Dorsolateral prefrontal cortex (tissue), 120 donors: ENCODE measurements at regions of chr3 and their contacts with region 1.

Region 1: DNA sequence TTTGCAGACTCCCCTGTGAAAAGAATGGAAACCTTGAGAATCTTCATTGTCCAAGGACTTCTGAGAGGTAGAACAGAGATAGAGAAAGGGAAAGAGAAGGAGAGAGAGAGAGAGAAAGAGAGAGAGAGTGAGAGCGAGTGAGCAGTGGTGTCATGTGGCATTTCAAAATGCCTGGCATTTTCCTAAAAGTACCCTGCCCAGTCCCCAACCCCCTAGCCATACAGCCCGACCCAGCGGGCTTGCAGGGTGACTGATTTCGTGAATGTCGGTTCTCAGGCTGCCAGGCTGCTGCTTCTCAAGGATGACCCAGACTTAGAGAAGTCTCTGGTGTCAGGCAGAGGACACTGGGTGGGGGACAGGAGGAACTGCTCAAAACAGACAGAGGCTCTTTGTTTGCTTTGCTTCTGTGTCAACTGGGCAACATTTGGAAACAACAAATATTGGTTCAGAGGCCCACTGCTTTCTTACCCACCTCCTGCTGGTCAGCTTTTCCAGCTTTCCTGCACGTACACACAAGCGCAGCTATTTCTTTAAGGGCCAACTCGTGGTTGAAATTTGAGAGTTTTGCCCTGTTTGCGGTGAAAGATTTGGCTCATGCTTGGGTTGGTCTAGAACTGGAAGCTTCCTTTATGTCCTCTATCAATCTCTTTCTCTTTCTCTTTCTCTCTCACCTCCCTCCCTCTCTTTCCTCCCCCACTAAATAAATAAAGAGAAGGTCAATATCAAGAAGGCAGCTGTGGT is 3.7 kb upstream of the TF start:
- DNase-seq: no peak
- H3K4me3 ChIP-seq: peak overlapping the region in 25 of 59 donors; percentile 0 to 49 (median 19)
- H3K27ac ChIP-seq: peak overlapping the region; percentile 30 to 100 (median 98)
- H3K27me3 ChIP-seq: no peaks in the 10 kb centered on the region
- CTCF ChIP-seq: peak in 6 of 56 donors; percentile 5 to 38 (median 18)

Region 2: GRCh38 chr3:133573054-133573628 is 169.4 kb before region 1 on chr3:
- intact Hi-C with region 1: loop called in 1 of 2 experiments (anchors 10 kb)
- DNase-seq: peak; percentile 100
- H3K4me3 ChIP-seq: peak overlapping the region; percentile 45 to 99 (median 84)
- H3K27ac ChIP-seq: peak overlapping the region; percentile 6 to 98 (median 90)
- H3K27me3 ChIP-seq: no peaks in the 10 kb centered on the region
- CTCF ChIP-seq: peak in 27 of 56 donors; percentile 7 to 42 (median 20)

Region 3: DNA sequence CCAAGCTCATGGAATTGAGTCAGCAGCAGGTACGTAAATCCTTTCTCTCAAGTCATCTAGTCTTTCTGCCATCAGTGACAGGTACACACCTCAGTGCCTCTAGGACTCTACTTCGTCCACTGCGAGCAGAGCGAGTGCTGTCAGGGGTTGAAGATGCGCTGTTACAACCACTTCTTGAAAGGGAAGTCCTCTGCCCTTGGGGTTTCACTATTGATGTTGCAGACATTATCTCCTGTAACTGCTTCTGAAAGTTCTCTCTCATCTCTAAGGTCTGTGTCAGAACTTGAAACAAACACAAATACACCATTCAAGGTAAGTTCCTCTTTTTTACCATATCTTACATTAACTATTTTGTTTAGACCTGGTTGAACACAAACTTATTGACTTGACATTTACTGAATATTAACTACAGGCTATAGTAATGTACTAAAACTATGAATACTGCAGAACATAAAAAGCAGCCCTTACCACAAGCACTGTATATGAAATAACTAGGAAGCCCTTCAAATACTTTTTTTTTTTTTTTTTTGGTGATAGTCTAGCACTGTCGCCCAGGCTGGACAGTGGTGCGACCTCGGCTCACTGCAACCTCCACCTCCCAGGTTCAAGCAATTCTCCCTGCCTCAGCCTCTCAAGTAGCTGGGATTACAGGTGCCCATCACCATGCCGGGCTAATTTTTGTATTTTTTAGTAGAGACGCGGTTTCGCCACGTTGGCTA is 122.3 kb before region 1 on chr3:
- intact Hi-C with region 1: no loop called
- DNase-seq: no peak
- H3K4me3 ChIP-seq: no peak overlapping the region
- H3K27ac ChIP-seq: no peak overlapping the region
- H3K27me3 ChIP-seq: no peaks in the 10 kb centered on the region
- CTCF ChIP-seq: no peak

Region 4: GRCh38 chr3:133693821-133694220 is 48.7 kb before region 1 on chr3:
- intact Hi-C with region 1: no loop called
- DNase-seq: no peak
- H3K4me3 ChIP-seq: no peak overlapping the region
- H3K27ac ChIP-seq: no peak overlapping the region
- H3K27me3 ChIP-seq: no peaks in the 10 kb centered on the region
- CTCF ChIP-seq: no peak

Region 5: DNA sequence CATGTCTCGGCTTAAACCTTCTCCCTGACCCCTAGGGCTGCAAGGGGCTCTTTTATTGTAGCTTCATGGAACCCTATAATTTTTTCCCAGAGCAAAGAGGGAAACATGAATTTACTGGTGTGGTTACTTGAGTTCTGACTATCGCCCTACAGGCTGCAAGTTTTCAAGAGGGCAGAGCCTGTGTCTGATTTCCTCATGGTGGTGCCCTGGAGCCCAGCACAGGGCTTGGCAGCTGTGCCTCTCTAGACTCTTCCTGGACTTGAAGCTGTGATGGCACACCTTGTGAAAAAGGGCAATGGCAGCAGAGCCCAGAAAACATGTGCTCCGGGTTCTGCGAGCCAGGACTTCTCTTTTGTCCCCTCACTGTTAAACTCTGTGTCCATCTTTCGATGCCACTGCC is 30.5 kb before region 1 on chr3:
- intact Hi-C with region 1: loop called in 1 of 2 experiments (anchors 5 kb)
- DNase-seq: peak in 3 of 10 donors; percentile 20 to 65 (median 61)
- H3K4me3 ChIP-seq: no peak overlapping the region
- H3K27ac ChIP-seq: peak overlapping the region in 35 of 59 donors; percentile 6 to 83 (median 51)
- H3K27me3 ChIP-seq: no peaks in the 10 kb centered on the region
- CTCF ChIP-seq: peak in 31 of 56 donors; percentile 8 to 56 (median 33)

Region 6: DNA sequence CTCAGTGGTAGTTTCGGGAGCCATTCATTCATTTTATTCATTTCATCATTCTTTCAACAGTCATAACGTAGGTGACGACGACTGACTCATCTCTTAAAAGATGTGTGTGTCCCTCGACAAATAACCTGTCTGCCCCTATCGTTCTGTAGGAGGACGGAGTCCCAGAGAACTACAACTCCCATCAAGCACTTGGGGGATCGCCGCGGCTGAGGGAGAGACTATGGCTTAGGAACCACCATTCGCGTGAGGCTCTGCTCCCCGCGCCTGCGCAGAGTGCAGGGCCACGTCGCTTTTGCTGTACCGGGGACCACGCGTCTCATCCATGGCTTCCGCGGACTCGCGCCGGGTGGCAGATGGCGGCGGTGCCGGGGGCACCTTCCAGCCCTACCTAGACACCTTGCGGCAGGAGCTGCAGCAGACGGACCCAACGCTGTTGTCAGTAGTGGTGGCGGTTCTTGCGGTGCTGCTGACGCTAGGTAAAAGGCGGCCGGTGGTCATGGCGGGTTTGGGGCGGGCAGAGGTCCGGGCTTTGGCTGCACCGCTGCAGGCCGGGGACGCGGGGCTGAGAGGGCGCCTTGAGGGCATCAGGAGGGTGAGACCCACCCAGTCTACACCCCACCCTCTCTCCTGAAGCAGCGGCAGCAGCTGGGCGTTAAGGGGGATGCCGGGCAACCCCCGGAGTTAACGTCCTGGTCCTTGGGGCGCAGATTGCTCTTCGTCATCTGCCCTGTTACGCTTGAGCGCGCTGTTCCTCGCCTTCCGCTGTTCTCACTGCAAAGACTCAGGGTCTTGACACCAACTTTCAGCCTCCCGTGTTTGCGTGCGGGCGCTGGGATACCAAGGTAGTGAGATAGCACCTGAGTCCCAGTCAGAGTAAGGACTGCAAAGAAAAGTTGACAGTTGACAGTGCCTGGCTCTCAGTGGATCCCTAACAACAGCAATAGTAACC is 63.3 kb after region 1 on chr3 and contains the start of gene SRPRB:
- intact Hi-C with region 1: loop called in 1 of 2 experiments (anchors 5 kb)
- DNase-seq: peak; percentile 93 to 97 (median 96)
- H3K4me3 ChIP-seq: peak within 1 kb of the TSS; percentile 58 to 98 (median 91)
- H3K27ac ChIP-seq: peak within 1 kb of the TSS in 38 of 59 donors; percentile 8 to 84 (median 56)
- H3K27me3 ChIP-seq: no peaks in the 10 kb centered on the region
- CTCF ChIP-seq: peak in 36 of 56 donors; percentile 6 to 66 (median 34)
- total RNA-seq, gene SRPRB: 22.8 to 66.1 (median 40.5) TPM